WTC11 (cell line): ENCODE measurements at regions of chr19 and their contacts with region 1.

Region 1: GRCh38 chr19:29761575-29762232 is 46.6 kb upstream of the C19orf12 start:
- DNase-seq: no peak
- ATAC-seq: no peak
- H3K4me3 Mint-ChIP-seq: no peak overlapping the region
- H3K27ac Mint-ChIP-seq: no peak overlapping the region
- H3K4me1 Mint-ChIP-seq: peaks cover 4% of the 10 kb centered on the region; the same call in 1 of the 2 replicates
- H3K27me3 Mint-ChIP-seq: no peaks in the 10 kb centered on the region
- CTCF ChIP-seq: no peak

Region 2: GRCh38 chr19:29514525-29515232 is 247.0 kb before region 1 on chr19:
- CTCF ChIA-PET with region 1: no interaction called
- POLR2A ChIA-PET with region 1: no interaction called
- DNase-seq: no peak
- ATAC-seq: no peak
- H3K4me3 Mint-ChIP-seq: no peak overlapping the region
- H3K27ac Mint-ChIP-seq: no peak overlapping the region
- H3K4me1 Mint-ChIP-seq: no peaks in the 10 kb centered on the region; the same call in 1 of the 2 replicates
- H3K27me3 Mint-ChIP-seq: peaks cover 10% of the 10 kb centered on the region
- CTCF ChIP-seq: no peak

Region 3: GRCh38 chr19:29645911-29646310 is 115.8 kb before region 1 on chr19:
- CTCF ChIA-PET with region 1: no interaction called
- POLR2A ChIA-PET with region 1: no interaction called
- DNase-seq: no peak
- ATAC-seq: peak; percentile 28
- H3K4me3 Mint-ChIP-seq: 0 out of 2 replicates have a peak overlapping the region, but pooled peaks have one; percentile 10
- H3K27ac Mint-ChIP-seq: no peak overlapping the region
- H3K4me1 Mint-ChIP-seq: peaks cover 19% of the 10 kb centered on the region
- H3K27me3 Mint-ChIP-seq: no peaks in the 10 kb centered on the region
- CTCF ChIP-seq: no peak

Region 4: GRCh38 chr19:29714953-29715700 is 46.6 kb before region 1 on chr19 and contains the start of gene C19orf12:
- CTCF ChIA-PET with region 1: interaction called, 17 read pairs
- POLR2A ChIA-PET with region 1: no interaction called
- DNase-seq: peak; percentile 61
- ATAC-seq: peak; percentile 80
- H3K4me3 Mint-ChIP-seq: peak within 1 kb of the TSS; percentile 71
- H3K27ac Mint-ChIP-seq: peak within 1 kb of the TSS; percentile 77
- H3K4me1 Mint-ChIP-seq: peaks cover 32% of the 10 kb centered on the region
- H3K27me3 Mint-ChIP-seq: no peaks in the 10 kb centered on the region
- CTCF ChIP-seq: no peak
- total RNA-seq, gene C19orf12: 15.5 to 19.0 TPM (median 17.2 TPM) in 3 replicates

Region 5: DNA sequence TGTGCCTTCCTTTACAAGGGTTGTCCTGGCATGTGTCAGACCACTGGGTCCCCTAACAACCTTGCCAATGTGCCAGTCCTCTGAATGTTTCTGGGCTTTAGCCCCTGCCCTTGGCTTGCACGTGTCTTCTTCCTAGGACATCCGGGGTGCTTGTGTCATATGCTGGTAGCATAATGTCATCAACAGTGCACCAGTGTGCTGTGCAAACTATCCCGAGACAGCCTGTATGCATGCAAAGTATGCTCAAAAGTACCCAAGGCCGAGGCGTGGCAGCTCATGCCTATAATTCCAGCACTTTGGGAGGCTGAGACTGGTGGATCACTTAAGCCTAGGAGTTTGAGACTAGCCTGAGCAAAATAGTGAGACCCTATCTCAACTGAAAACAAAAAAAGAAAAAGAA is 25.9 kb before region 1 on chr19:
- CTCF ChIA-PET with region 1: interaction called, 19 read pairs
- POLR2A ChIA-PET with region 1: no interaction called
- DNase-seq: no peak
- ATAC-seq: no peak
- H3K4me3 Mint-ChIP-seq: no peak overlapping the region
- H3K27ac Mint-ChIP-seq: no peak overlapping the region
- H3K4me1 Mint-ChIP-seq: no peaks in the 10 kb centered on the region
- H3K27me3 Mint-ChIP-seq: no peaks in the 10 kb centered on the region
- CTCF ChIP-seq: no peak

Region 6: GRCh38 chr19:29771708-29772414 is 10.2 kb after region 1 on chr19:
- CTCF ChIA-PET with region 1: interaction called, 70 read pairs
- POLR2A ChIA-PET with region 1: no interaction called
- DNase-seq: peak; percentile 76
- ATAC-seq: peak; percentile 91
- H3K4me3 Mint-ChIP-seq: no peak overlapping the region
- H3K27ac Mint-ChIP-seq: no peak overlapping the region
- H3K4me1 Mint-ChIP-seq: peaks cover 15% of the 10 kb centered on the region
- H3K27me3 Mint-ChIP-seq: no peaks in the 10 kb centered on the region; the same call in 1 of the 2 replicates
- CTCF ChIP-seq: peak; percentile 33; the same call in 1 of the 2 replicates

Region 7: GRCh38 chr19:29796173-29796573 is 34.5 kb after region 1 on chr19:
- CTCF ChIA-PET with region 1: interaction called, 10 read pairs
- POLR2A ChIA-PET with region 1: no interaction called
- DNase-seq: no peak
- ATAC-seq: no peak
- H3K4me3 Mint-ChIP-seq: no peak overlapping the region
- H3K27ac Mint-ChIP-seq: no peak overlapping the region
- H3K4me1 Mint-ChIP-seq: peaks cover 4% of the 10 kb centered on the region; the same call in 1 of the 2 replicates
- H3K27me3 Mint-ChIP-seq: 0 out of 2 replicates have a peak, but pooled peaks cover 3% of the 10 kb centered on the region
- CTCF ChIP-seq: no peak

Region 8: GRCh38 chr19:29858000-29858596 is 96.4 kb after region 1 on chr19:
- CTCF ChIA-PET with region 1: interaction called, 20 read pairs
- POLR2A ChIA-PET with region 1: no interaction called
- DNase-seq: peak; percentile 80
- ATAC-seq: peak; percentile 89
- H3K4me3 Mint-ChIP-seq: no peak overlapping the region
- H3K27ac Mint-ChIP-seq: no peak overlapping the region
- H3K4me1 Mint-ChIP-seq: peaks cover 13% of the 10 kb centered on the region
- H3K27me3 Mint-ChIP-seq: no peaks in the 10 kb centered on the region
- CTCF ChIP-seq: peak; percentile 74; the same call in 1 of the 2 replicates

Region 9: DNA sequence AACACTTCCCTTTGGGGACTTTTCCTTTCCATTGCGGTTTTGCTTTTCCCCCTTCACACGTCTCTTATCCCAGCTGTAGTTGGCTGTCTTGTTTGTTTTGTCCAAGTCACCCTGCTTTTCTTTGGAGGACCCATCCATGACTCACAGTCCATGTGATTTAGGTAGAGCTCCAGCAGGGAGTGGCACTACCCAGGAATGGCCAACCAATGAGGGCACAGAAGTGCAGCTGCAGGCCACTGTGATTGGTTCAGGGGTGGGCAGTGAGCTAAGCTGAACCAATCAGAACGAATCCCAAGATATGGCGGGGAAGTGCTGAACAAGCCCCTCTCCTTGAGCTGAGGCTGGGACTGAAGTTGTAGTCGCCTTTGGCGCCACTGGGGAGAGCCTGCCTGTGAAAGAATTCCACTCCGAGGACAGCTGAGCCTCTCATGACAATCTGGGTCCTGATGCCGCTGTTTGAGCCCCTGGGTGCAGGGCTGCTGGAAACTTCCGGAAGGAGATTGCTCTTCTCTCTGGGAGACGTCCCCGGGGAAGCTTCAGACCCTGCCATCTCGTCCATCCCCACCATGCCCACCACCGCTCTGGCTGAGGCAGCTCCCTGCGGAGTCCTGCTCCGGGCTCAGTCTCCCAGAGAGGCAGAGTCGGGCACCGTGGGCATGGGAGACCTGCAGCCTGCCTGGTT is 117.4 kb after region 1 on chr19:
- CTCF ChIA-PET with region 1: interaction called, 10 read pairs
- POLR2A ChIA-PET with region 1: no interaction called
- DNase-seq: peak; percentile 36
- ATAC-seq: peak; percentile 84
- H3K4me3 Mint-ChIP-seq: no peak overlapping the region
- H3K27ac Mint-ChIP-seq: no peak overlapping the region
- H3K4me1 Mint-ChIP-seq: peaks cover 12% of the 10 kb centered on the region
- H3K27me3 Mint-ChIP-seq: peaks cover 3% of the 10 kb centered on the region
- CTCF ChIP-seq: no peak

Region 10: GRCh38 chr19:29967623-29968022 is 205.9 kb after region 1 on chr19:
- CTCF ChIA-PET with region 1: no interaction called
- POLR2A ChIA-PET with region 1: no interaction called
- DNase-seq: no peak
- ATAC-seq: no peak
- H3K4me3 Mint-ChIP-seq: no peak overlapping the region
- H3K27ac Mint-ChIP-seq: 0 out of 2 replicates have a peak overlapping the region, but pooled peaks have one; percentile 6
- H3K4me1 Mint-ChIP-seq: peaks cover 42% of the 10 kb centered on the region
- H3K27me3 Mint-ChIP-seq: no peaks in the 10 kb centered on the region
- CTCF ChIP-seq: no peak